HepG2 (cell line): ENCODE measurements at regions of chr15 and their contacts with region 1.

Region 1: GRCh38 chr15:99250494-99251435 is 516 bp upstream of the LRRC28 start:
- DNase-seq: peak; percentile 97
- ATAC-seq: peak; percentile 94
- H3K4me3 ChIP-seq: peak overlapping the region; percentile 72 to 97 (median 78)
- H3K27ac ChIP-seq: peak overlapping the region; percentile 98
- H3K4me1 ChIP-seq: peaks cover 45% of the 10 kb centered on the region
- H3K27me3 ChIP-seq: no peaks in the 10 kb centered on the region; a peak in 1 of 5 replicates
- CTCF ChIP-seq: no peak
- EP300 ChIP-seq: no peak
- POLR2A ChIP-seq: peak; percentile 54 to 93; a peak in 3 of 4 replicates
- RAD21 ChIP-seq: no peak

Region 2: DNA sequence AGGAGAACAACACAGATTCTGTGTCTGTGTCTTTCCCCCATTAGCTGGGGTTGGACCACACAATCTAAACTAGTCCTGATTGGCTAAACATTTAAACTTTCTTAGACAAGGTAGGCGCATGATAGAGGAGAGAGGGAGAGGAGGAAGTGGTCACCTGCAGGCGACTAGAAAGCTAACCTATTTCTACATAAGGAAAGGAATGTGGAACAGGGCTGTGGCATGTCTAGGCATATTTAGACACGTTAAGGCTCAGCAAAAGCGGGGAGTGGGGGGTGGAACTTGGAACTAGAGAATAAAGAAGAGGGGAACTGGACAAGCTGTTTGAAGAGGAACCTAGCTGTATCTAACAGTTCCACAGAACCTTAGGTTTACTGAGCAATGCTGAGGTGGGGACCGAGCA is 13.4 kb after region 1 on chr15:
- CTCF ChIA-PET with region 1: no interaction called
- POLR2A ChIA-PET with region 1: interaction called, 16 read pairs
- in situ Hi-C with region 1: no loop called
- intact Hi-C with region 1: no loop called
- DNase-seq: no peak
- ATAC-seq: no peak
- H3K4me3 ChIP-seq: no peak overlapping the region
- H3K27ac ChIP-seq: no peak overlapping the region
- H3K4me1 ChIP-seq: peaks cover 41% of the 10 kb centered on the region
- H3K27me3 ChIP-seq: no peaks in the 10 kb centered on the region
- CTCF ChIP-seq: no peak
- EP300 ChIP-seq: no peak
- POLR2A ChIP-seq: no peak
- RAD21 ChIP-seq: no peak

Region 3: GRCh38 chr15:99733268-99734039 is 482.7 kb after region 1 on chr15 and contains the start of gene LYSMD4:
- CTCF ChIA-PET with region 1: no interaction called
- POLR2A ChIA-PET with region 1: interaction called, 18 read pairs
- in situ Hi-C with region 1: no loop called
- intact Hi-C with region 1: no loop called
- DNase-seq: peak; percentile 89
- ATAC-seq: peak; percentile 97
- H3K4me3 ChIP-seq: peak within 1 kb of the TSS; percentile 75 to 92 (median 84)
- H3K27ac ChIP-seq: peak within 1 kb of the TSS; percentile 89
- H3K4me1 ChIP-seq: peaks cover 59% of the 10 kb centered on the region
- H3K27me3 ChIP-seq: no peaks in the 10 kb centered on the region; a peak in 1 of 5 replicates
- CTCF ChIP-seq: no peak; the same call in 1 of the 2 replicates
- EP300 ChIP-seq: no peak
- POLR2A ChIP-seq: peak; percentile 76 to 79
- RAD21 ChIP-seq: no peak
- total RNA-seq, gene LYSMD4: 5.6 and 8.5 TPM in 2 replicates

Region 4: DNA sequence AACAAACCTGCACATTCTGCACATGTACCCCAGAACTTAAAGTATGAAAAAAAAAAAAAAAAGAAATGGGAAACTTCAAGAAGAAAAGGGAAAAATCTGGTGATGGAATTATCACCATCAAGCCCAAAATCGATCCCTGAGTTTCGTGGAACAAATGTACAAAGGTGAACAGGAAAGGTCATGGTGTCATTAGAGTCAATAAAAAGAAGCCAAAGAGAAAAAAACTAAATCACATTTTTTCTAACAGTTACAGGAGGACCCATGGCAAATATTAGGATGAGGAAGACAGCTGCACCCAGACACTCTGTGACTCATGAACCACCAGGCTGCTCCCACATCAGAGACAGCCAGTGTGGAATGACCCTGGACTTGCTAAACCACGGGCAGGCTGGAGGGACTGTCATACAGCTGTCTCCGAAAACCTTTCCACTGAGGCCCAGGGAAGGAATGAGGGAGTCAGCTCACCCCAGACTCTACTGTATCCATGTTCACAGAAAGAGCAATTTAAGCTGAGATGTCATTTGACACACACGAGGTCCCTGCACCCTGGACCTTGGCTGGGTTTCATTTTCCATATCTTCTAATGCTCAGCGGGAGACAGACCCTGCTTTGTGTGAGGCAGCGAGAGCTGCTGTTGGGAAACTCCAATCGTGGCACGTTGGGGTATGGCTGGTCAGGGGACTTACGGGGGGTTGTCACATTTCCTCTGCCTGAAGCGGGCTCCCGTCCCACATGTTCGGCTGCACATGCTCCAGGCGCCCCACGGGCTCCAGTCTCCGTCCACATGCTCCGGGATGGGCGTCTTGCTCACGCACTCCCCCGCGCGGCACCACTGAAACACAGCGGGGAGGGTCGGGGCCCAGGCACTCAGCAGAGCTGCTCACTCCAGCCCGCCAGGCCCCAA is 880.8 kb after region 1 on chr15:
- CTCF ChIA-PET with region 1: no interaction called
- POLR2A ChIA-PET with region 1: no interaction called
- in situ Hi-C with region 1: loop called (anchors 25 kb)
- intact Hi-C with region 1: no loop called
- DNase-seq: peak; percentile 61
- ATAC-seq: peak; percentile 98
- H3K4me3 ChIP-seq: peak overlapping the region in 2 of 3 experiments; percentile 41 to 55; a peak in 4 of 6 replicates
- H3K27ac ChIP-seq: no peak overlapping the region
- H3K4me1 ChIP-seq: peaks cover 14% of the 10 kb centered on the region
- H3K27me3 ChIP-seq: peaks cover 1 to 4% of the 10 kb centered on the region in 2 experiments; a peak in 1 of 5 replicates
- CTCF ChIP-seq: peak; percentile 87
- EP300 ChIP-seq: 0 out of 4 replicates have a peak, but pooled peaks of 1 of the 2 experiments have one; percentile 9
- POLR2A ChIP-seq: no peak
- RAD21 ChIP-seq: peak; percentile 68

Region 5: GRCh38 chr15:100349696-100350433 is 1099.1 kb after region 1 on chr15:
- CTCF ChIA-PET with region 1: no interaction called
- POLR2A ChIA-PET with region 1: no interaction called
- in situ Hi-C with region 1: loop called (anchors 25 kb)
- intact Hi-C with region 1: no loop called
- DNase-seq: peak; percentile 76
- ATAC-seq: peak; percentile 96
- H3K4me3 ChIP-seq: peak overlapping the region; percentile 51 to 72 (median 53); a peak in 5 of 6 replicates
- H3K27ac ChIP-seq: peak overlapping the region; percentile 39
- H3K4me1 ChIP-seq: peaks cover 19% of the 10 kb centered on the region
- H3K27me3 ChIP-seq: no peaks in the 10 kb centered on the region; a peak in 2 of 5 replicates
- CTCF ChIP-seq: peak; percentile 90
- EP300 ChIP-seq: no peak
- POLR2A ChIP-seq: no peak
- RAD21 ChIP-seq: peak; percentile 62